Mammary epithelial cell (primary cell): ENCODE measurements at regions of chr7 and their contacts with region 1.

Region 1: GRCh38 chr7:32928785-32929298 is 28.4 kb upstream of the FKBP9 start:
- DNase-seq: no peak
- H3K4me3 ChIP-seq: no peak overlapping the region
- H3K27ac ChIP-seq: no peak overlapping the region
- H3K4me1 ChIP-seq: no peaks in the 10 kb centered on the region
- H3K27me3 ChIP-seq: no peaks in the 10 kb centered on the region
- CTCF ChIP-seq: no peak

Region 2: GRCh38 chr7:32126843-32127242 is 802.0 kb before region 1 on chr7:
- CTCF ChIA-PET with region 1: interaction called, 11 read pairs
- dilution Hi-C with region 1: no loop called
- in situ Hi-C with region 1: no loop called
- intact Hi-C with region 1: no loop called
- DNase-seq: no peak
- H3K4me3 ChIP-seq: no peak overlapping the region
- H3K27ac ChIP-seq: no peak overlapping the region
- H3K4me1 ChIP-seq: no peaks in the 10 kb centered on the region
- H3K27me3 ChIP-seq: no peaks in the 10 kb centered on the region
- CTCF ChIP-seq: no peak

Region 3: DNA sequence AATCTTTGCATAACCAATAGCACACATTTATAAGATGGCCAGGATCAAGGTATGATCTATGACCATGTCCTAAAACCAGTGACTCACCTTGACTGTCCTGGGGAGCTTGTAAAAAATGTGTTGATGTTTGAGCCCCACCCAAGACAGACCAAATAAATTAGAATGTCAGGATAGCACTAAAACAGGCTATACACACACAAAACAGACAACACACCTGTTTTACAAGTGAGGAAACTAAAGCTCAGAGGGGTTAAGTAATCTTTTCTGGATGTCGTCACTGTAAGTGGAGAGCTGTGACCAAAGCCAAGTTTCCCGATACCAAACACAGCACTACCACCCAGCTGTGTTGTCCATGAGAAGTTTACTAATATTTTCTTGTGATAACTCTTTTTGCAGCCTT is 349.1 kb before region 1 on chr7:
- CTCF ChIA-PET with region 1: no interaction called
- dilution Hi-C with region 1: no loop called
- in situ Hi-C with region 1: no loop called
- intact Hi-C with region 1: no loop called
- DNase-seq: peak; percentile 9
- H3K4me3 ChIP-seq: no peak overlapping the region
- H3K27ac ChIP-seq: no peak overlapping the region
- H3K4me1 ChIP-seq: no peaks in the 10 kb centered on the region
- H3K27me3 ChIP-seq: no peaks in the 10 kb centered on the region
- CTCF ChIP-seq: no peak

Region 4: DNA sequence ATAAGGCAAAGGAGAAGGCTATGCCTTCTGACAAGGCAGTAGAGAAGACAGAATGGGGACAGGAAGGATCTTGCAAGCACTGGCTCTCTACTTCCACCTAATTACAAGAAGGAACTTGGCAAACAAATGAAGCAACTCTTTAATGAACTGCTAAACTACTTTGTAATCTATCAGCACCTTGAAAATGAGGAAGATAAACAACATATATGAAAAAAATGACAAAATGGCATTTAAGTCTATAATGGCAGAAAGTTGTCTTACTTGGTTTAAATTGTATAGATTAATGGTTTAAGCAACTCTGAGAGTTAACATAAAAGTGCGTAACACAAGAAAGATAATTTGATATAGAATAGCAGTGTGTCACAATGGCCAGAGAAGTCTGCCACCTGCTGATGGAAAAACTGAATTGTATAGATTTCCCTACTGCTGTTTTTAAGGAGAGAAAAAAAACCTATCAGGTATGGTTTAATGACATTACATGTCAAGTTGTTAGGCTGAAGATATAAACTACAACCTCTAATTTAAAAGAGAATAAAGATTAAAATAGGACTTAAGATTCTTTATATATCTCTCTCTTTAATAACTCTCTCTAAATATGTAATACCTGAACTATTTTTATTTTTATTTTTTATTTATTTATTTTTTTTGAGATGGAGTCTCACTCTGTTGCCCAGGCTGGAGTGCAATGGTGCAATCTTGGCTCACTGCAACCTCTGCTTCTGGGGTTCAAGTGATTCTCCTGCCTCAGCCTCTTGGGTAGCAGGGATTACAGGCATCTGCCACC is 121.9 kb after region 1 on chr7:
- CTCF ChIA-PET with region 1: no interaction called
- dilution Hi-C with region 1: no loop called
- in situ Hi-C with region 1: no loop called
- intact Hi-C with region 1: no loop called
- DNase-seq: peak; percentile 35
- H3K4me3 ChIP-seq: no peak overlapping the region
- H3K27ac ChIP-seq: no peak overlapping the region
- H3K4me1 ChIP-seq: peaks cover 8% of the 10 kb centered on the region
- H3K27me3 ChIP-seq: no peaks in the 10 kb centered on the region
- CTCF ChIP-seq: peak; percentile 51 to 70

Region 5: GRCh38 chr7:33562996-33563395 is 634.2 kb after region 1 on chr7:
- CTCF ChIA-PET with region 1: no interaction called
- dilution Hi-C with region 1: no loop called
- in situ Hi-C with region 1: no loop called
- intact Hi-C with region 1: no loop called
- DNase-seq: no peak
- H3K4me3 ChIP-seq: no peak overlapping the region
- H3K27ac ChIP-seq: no peak overlapping the region
- H3K4me1 ChIP-seq: no peaks in the 10 kb centered on the region
- H3K27me3 ChIP-seq: no peaks in the 10 kb centered on the region
- CTCF ChIP-seq: no peak